Caco-2 (cell line): ENCODE measurements at regions of chr10 and their contacts with region 1.

Region 1: GRCh38 chr10:6580279-6581029 is 378 bp upstream of the PRKCQ start:
- DNase-seq: peak; percentile 86 to 95
- H3K4me3 ChIP-seq: peak overlapping the region; percentile 76
- H3K4me3 Mint-ChIP-seq: peak overlapping the region; percentile 93
- H3K27ac Mint-ChIP-seq: peak overlapping the region; percentile 83
- H3K4me1 ChIP-seq: 0 out of 2 replicates have a peak, but pooled peaks cover 3% of the 10 kb centered on the region
- H3K4me1 Mint-ChIP-seq: peaks cover 5% of the 10 kb centered on the region
- H3K27me3 ChIP-seq: 0 out of 2 replicates have a peak, but pooled peaks cover 1% of the 10 kb centered on the region
- H3K27me3 Mint-ChIP-seq: peaks cover 15% of the 10 kb centered on the region
- CTCF ChIP-seq: peak; percentile 53 to 84

Region 2: GRCh38 chr10:6416892-6417512 is 163.5 kb before region 1 on chr10:
- CTCF ChIA-PET with region 1: no interaction called
- POLR2A ChIA-PET with region 1: no interaction called
- intact Hi-C with region 1: loop called (anchors 1 kb)
- DNase-seq: peak in 1 of 2 experiments; percentile 68
- H3K4me3 ChIP-seq: no peak overlapping the region
- H3K4me3 Mint-ChIP-seq: no peak overlapping the region
- H3K27ac Mint-ChIP-seq: no peak overlapping the region
- H3K4me1 ChIP-seq: no peaks in the 10 kb centered on the region
- H3K4me1 Mint-ChIP-seq: no peaks in the 10 kb centered on the region
- H3K27me3 ChIP-seq: peaks cover 5% of the 10 kb centered on the region
- H3K27me3 Mint-ChIP-seq: peaks cover 14% of the 10 kb centered on the region
- CTCF ChIP-seq: peak in 1 of 2 experiments; percentile 81

Region 3: DNA sequence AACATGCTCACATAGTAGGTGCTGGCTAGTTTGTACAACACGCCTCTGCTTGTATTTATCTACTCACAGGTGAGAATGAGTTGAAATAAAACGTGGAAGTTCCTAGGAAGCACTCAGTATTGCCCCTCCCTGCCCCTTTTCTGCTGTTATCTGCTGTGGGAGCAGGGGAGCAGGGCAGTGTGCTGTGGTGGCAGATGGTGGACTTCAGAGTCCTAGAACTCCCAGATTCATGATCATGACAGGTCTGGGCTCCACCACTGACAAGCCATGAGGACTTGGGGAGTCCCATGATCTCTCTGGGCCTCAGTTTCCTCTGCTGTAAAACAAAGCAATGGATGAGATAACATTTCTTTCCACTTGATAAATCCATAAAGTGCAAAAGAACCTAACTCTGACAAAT is 11.2 kb after region 1 on chr10:
- CTCF ChIA-PET with region 1: interaction called, 8 read pairs
- POLR2A ChIA-PET with region 1: no interaction called
- intact Hi-C with region 1: loop called (anchors 1 kb)
- DNase-seq: no peak
- H3K4me3 ChIP-seq: no peak overlapping the region
- H3K4me3 Mint-ChIP-seq: no peak overlapping the region
- H3K27ac Mint-ChIP-seq: no peak overlapping the region
- H3K4me1 ChIP-seq: no peaks in the 10 kb centered on the region
- H3K4me1 Mint-ChIP-seq: no peaks in the 10 kb centered on the region
- H3K27me3 ChIP-seq: no peaks in the 10 kb centered on the region
- H3K27me3 Mint-ChIP-seq: peaks cover 15% of the 10 kb centered on the region
- CTCF ChIP-seq: no peak

Region 4: GRCh38 chr10:6647811-6648526 is 67.5 kb after region 1 on chr10:
- CTCF ChIA-PET with region 1: interaction called, 7 read pairs
- POLR2A ChIA-PET with region 1: no interaction called
- intact Hi-C with region 1: loop called (anchors 1 kb)
- DNase-seq: peak; percentile 70 to 80
- H3K4me3 ChIP-seq: no peak overlapping the region
- H3K4me3 Mint-ChIP-seq: no peak overlapping the region
- H3K27ac Mint-ChIP-seq: no peak overlapping the region
- H3K4me1 ChIP-seq: no peaks in the 10 kb centered on the region
- H3K4me1 Mint-ChIP-seq: no peaks in the 10 kb centered on the region
- H3K27me3 ChIP-seq: no peaks in the 10 kb centered on the region
- H3K27me3 Mint-ChIP-seq: peaks cover 11% of the 10 kb centered on the region
- CTCF ChIP-seq: peak; percentile 85 to 90

Region 5: DNA sequence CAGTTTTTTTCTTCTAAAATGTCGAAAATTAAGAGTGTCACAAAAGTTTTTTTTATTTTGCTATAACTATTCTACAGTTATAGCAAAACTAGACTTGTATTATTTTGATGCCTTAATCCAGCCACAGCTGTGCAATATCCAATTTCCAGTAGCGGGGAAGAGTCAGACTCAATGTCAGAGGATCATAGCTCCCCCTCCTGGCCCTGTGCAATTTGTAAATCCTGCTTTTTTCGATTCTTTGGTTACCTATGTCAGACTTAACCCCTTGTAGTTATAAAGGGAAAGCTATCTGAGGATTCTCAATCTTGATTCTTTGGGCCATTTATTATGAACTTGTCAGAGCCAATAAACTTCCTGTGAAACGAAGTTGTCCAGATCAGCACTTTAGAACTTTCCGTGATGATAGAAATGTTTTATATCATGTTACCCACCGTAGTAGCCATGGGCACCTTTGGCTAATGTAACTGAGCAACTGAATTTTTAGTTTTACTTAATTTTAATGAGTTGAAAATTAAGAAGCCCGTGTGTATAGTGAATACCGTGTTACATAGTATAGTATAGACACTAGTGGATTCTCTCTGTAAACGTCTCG is 87.3 kb after region 1 on chr10:
- CTCF ChIA-PET with region 1: interaction called, 6 read pairs
- POLR2A ChIA-PET with region 1: no interaction called
- intact Hi-C with region 1: loop called (anchors 1 kb)
- DNase-seq: peak; percentile 53 to 58
- H3K4me3 ChIP-seq: no peak overlapping the region
- H3K4me3 Mint-ChIP-seq: no peak overlapping the region
- H3K27ac Mint-ChIP-seq: no peak overlapping the region
- H3K4me1 ChIP-seq: no peaks in the 10 kb centered on the region
- H3K4me1 Mint-ChIP-seq: no peaks in the 10 kb centered on the region
- H3K27me3 ChIP-seq: no peaks in the 10 kb centered on the region
- H3K27me3 Mint-ChIP-seq: peaks cover 17% of the 10 kb centered on the region
- CTCF ChIP-seq: peak; percentile 74 to 77

Region 6: GRCh38 chr10:6678211-6678803 is 97.9 kb after region 1 on chr10:
- CTCF ChIA-PET with region 1: interaction called, 3 read pairs
- POLR2A ChIA-PET with region 1: no interaction called
- intact Hi-C with region 1: loop called (anchors 1 kb)
- DNase-seq: peak; percentile 53 to 66
- H3K4me3 ChIP-seq: no peak overlapping the region
- H3K4me3 Mint-ChIP-seq: no peak overlapping the region
- H3K27ac Mint-ChIP-seq: no peak overlapping the region
- H3K4me1 ChIP-seq: no peaks in the 10 kb centered on the region
- H3K4me1 Mint-ChIP-seq: no peaks in the 10 kb centered on the region
- H3K27me3 ChIP-seq: no peaks in the 10 kb centered on the region
- H3K27me3 Mint-ChIP-seq: peaks cover 31% of the 10 kb centered on the region
- CTCF ChIP-seq: peak; percentile 89 to 91